ENCODE measurements at regions of chr9 and their contacts with region 1.

Region 1: DNA sequence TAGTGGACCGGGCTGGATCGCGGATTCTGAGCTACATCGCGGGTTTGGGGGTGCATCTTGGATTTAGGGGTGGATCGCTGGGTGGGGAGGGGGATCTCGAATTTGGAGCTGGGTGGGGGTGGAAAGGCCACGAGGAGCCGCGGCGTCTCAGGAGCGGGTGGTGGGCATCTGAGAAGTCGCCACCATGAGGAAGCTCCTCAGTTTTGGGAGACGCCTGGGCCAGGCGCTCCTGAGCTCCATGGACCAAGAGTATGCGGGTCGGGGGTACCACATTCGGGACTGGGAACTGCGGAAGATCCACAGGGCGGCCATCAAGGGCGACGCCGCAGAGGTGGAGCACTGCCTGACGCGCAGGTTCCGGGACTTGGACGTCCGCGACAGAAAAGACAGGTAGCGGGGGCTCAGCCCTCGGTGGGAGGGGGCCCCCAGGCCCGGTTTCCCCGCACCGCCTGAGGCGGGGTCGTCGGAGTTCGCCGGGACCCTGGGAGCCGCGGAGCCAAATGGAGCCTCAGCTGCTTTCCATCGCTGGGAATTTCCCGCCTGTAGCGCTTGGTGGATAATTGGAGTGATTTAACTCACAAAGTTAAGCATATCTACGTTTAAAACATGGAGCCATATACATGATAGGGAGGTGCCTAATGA is 376 bp downstream of the ANKRD18B start:
- DNase-seq: peak; percentile 12

Region 2: DNA sequence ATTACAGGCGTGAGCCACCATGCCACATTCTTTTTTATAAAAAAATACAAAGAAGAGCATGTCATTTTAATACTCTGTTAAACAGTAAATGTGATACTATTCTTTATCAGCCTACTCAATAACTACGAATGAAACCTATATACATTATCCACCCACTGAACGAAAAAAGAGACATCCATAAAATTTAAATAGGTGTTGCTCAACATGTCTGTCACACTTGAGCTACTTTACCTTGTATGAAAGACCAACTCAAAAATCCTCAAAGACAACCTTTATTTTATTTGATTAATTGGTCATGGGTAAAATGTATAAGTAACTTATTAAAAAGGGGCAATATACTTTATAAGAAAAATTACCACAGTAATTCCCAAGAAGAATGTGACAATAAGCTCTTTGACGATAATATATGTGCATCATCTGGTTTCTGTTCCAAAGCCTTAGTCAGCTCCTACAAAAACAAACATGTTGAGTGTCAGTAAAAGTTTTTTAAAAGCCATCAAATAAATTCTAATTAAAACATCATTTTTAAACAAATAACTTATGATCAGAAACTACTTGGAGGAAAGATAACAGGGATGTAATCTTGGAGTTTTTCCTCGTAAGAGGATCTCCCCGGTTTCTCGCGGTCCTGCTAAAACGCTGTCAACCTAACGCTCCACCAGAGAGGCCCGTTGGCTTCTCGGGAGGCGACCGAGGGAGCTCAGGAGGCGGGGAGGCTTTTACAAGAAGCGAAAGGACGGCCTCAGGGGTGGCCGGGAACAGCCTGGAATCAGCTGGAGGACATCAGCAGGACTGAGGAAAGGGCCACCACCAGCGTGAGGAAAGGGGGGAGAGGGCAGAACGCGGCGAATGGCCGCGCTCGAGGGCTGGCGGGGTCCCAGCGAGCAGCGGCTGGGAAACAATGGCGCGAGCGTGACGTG is 13.9 kb before region 1 on chr9:
- CTCF ChIA-PET with region 1: no interaction called
- POLR2A ChIA-PET with region 1: interaction called, 10 read pairs
- DNase-seq: peak; percentile 43

Region 3: GRCh38 chr9:34010979-34011378 is 486.6 kb after region 1 on chr9:
- CTCF ChIA-PET with region 1: no interaction called
- POLR2A ChIA-PET with region 1: no interaction called
- DNase-seq: no peak

Measured in HEK293T (cell line).